Endothelial cell of umbilical vein (primary cell): ENCODE measurements at regions of chr14 and their contacts with region 1.

Region 1: DNA sequence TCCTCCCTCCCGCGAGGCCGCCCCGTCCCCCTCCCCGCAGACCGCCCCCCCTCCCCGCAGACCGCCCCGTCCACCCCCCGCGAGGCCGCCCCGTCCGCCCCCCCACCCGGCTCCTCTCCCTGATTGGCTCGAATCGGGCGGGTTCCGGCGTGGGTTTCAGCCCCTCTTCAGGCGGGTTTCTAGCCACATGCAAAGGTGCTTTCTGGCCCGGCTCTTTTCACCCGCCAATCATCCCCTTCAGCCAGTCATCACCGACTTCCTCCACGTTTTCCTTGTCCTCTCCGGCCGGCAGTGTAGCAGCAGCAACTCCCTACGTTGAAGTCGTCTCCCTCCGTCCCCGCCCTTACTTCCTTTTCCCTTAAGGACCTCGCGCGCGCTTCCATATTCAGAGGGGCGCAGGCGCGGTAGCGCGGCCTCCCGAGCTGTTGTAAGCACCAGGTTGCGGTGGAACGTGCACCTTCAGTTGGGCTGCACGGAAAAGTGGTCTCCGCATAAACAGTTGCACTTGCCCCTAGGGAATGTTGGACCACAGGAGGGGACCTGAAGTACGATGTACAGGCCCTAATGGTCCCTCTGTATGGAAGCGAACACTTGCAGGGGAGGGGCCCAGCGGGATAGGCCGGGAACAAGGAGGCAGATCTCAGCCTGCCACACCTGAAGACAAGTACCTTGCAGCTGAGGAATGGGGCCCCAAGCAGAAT is 44.6 kb upstream of the ESR2 start:
- DNase-seq: peak; percentile 99
- H3K4me3 ChIP-seq: peak overlapping the region; percentile 50 to 56 (median 51)
- H3K27ac ChIP-seq: peak overlapping the region; percentile 14
- H3K4me1 ChIP-seq: peaks cover 10% of the 10 kb centered on the region
- H3K27me3 ChIP-seq: no peaks in the 10 kb centered on the region
- CTCF ChIP-seq: no peak
- POLR2A ChIP-seq: peak; percentile 79

Region 2: DNA sequence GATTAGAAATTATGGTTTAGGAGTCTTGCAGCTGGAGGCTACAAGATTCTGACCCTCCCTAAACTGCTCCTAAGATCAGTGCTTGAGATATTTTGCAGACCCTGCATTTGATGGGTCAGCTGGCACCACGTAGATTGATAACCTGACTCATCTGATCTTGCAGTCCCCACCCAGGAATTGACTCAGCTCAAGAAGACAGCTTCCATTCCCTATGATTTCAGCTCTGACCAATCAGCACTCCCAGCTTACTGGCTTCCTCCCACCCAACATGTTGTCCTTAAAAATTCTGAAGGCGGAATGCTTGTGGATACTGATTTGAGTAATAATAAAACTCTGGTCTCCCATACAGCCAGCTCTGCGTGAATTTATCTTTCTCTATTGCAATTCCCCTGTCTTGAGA is 26.1 kb after region 1 on chr14:
- CTCF ChIA-PET with region 1: no interaction called
- POLR2A ChIA-PET with region 1: no interaction called
- dilution Hi-C with region 1: no loop called
- intact Hi-C with region 1: no loop called
- DNase-seq: no peak
- H3K4me3 ChIP-seq: no peak overlapping the region
- H3K27ac ChIP-seq: no peak overlapping the region
- H3K4me1 ChIP-seq: no peaks in the 10 kb centered on the region
- H3K27me3 ChIP-seq: no peaks in the 10 kb centered on the region
- CTCF ChIP-seq: no peak
- POLR2A ChIP-seq: no peak

Region 3: DNA sequence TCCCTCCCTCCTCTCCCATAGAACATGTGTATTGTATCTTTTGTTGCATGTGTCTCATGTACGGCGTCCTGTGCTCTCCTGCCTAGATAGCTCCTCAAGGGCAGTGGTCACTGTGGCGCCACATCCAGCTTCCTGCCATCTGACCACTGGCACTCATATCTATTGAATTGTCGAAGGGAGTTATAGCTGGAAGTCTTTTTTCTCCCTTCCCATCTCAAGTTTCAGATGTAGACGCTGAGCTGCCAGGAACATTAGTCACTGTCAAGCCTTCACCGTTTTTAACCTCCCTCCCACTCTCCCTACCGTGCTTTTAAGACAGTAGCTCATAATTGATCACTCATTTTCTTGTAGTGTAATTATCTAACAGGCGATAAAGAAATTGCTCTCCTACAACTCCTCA is 82.4 kb after region 1 on chr14:
- CTCF ChIA-PET with region 1: interaction called, 11 read pairs
- POLR2A ChIA-PET with region 1: interaction called, 3 read pairs
- dilution Hi-C with region 1: no loop called
- intact Hi-C with region 1: no loop called
- DNase-seq: no peak
- H3K4me3 ChIP-seq: no peak overlapping the region
- H3K27ac ChIP-seq: no peak overlapping the region
- H3K4me1 ChIP-seq: no peaks in the 10 kb centered on the region
- H3K27me3 ChIP-seq: no peaks in the 10 kb centered on the region
- CTCF ChIP-seq: no peak
- POLR2A ChIP-seq: no peak

Region 4: DNA sequence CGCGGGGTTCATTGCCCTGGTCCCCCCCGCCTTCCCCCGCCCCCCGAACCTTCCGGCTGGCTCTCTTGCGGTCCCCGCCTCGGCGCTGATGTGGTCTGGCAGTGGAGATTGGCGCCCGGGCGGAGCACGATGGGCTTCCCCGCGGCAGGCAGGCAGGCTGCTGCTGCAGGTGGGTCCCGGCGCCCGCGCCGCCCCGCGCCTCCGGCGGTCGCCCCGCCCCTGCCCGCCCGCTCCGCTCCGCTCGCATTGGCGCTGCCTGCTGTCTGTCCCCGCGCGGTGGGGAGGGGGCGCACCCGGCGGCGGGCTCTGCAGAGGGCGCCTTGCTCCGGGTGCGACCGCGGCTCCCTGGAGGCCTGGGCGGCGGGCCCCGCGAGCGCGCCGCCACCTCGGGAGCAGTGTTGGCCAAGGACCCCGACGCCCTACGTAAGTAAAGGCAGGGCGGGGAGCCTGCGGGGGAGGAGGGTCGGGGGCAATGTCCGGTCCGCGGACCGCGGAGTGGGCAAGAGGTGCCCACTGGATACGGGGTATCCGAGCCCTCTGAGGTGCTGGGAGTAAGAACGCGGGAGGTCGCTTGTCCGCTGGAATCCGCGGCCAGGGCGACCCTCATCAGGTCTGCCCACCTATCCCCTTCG is 126.5 kb after region 1 on chr14 and contains the start of gene AKAP5:
- CTCF ChIA-PET with region 1: interaction called, 17 read pairs
- POLR2A ChIA-PET with region 1: no interaction called
- dilution Hi-C with region 1: no loop called
- intact Hi-C with region 1: no loop called
- DNase-seq: peak; percentile 63
- H3K4me3 ChIP-seq: peak within 1 kb of the TSS; percentile 70 to 79 (median 76)
- H3K27ac ChIP-seq: no peak within 1 kb of the TSS
- H3K4me1 ChIP-seq: peaks cover 14% of the 10 kb centered on the region
- H3K27me3 ChIP-seq: no peaks in the 10 kb centered on the region
- CTCF ChIP-seq: no peak
- POLR2A ChIP-seq: no peak
- total RNA-seq, gene AKAP5: 0.75 and 1.1 TPM in 2 replicates

Region 5: DNA sequence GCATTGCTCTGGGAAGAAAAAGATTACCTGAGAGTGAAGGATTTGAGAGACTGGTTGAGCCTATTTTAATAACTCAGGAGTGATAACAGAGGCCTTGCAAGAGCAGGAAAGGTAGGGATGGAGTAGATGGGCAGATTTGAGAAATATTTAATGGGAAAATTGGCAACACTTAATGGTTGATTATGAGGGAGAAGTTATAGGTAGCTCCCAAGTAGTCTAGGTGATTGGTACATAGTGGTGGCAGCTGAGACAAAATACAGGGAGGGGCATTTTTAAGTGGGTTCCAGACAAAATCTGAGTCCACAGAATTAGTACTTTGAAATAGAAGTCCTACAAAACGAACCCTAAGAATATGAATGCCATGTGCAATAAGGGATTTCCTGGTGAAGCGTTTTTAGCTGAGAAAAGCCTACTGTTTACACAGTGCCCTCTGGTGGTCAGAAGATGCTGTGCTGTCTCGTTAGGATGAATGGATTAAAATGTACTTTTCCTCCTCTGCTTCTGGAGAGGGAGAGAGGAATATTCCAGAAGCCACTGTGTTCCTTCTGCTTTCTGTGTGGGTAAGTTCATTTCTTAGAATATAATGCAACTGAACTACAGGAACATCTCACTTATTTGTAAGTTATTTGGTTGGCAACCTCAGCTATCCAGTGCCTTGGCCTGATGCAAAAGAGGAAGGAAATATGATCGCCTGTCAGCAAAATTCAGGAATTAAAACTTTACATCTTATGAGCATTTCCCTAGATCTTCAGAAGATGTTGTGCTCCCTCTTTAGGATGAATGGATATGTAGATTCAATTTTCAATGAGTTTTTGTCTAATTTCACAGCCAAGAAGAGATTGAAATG is 172.3 kb after region 1 on chr14:
- CTCF ChIA-PET with region 1: interaction called, 43 read pairs
- POLR2A ChIA-PET with region 1: no interaction called
- dilution Hi-C with region 1: no loop called
- intact Hi-C with region 1: no loop called
- DNase-seq: peak; percentile 72
- H3K4me3 ChIP-seq: no peak overlapping the region
- H3K27ac ChIP-seq: no peak overlapping the region
- H3K4me1 ChIP-seq: peaks cover 21% of the 10 kb centered on the region
- H3K27me3 ChIP-seq: no peaks in the 10 kb centered on the region
- CTCF ChIP-seq: peak; percentile 78 to 84
- POLR2A ChIP-seq: no peak

Region 6: DNA sequence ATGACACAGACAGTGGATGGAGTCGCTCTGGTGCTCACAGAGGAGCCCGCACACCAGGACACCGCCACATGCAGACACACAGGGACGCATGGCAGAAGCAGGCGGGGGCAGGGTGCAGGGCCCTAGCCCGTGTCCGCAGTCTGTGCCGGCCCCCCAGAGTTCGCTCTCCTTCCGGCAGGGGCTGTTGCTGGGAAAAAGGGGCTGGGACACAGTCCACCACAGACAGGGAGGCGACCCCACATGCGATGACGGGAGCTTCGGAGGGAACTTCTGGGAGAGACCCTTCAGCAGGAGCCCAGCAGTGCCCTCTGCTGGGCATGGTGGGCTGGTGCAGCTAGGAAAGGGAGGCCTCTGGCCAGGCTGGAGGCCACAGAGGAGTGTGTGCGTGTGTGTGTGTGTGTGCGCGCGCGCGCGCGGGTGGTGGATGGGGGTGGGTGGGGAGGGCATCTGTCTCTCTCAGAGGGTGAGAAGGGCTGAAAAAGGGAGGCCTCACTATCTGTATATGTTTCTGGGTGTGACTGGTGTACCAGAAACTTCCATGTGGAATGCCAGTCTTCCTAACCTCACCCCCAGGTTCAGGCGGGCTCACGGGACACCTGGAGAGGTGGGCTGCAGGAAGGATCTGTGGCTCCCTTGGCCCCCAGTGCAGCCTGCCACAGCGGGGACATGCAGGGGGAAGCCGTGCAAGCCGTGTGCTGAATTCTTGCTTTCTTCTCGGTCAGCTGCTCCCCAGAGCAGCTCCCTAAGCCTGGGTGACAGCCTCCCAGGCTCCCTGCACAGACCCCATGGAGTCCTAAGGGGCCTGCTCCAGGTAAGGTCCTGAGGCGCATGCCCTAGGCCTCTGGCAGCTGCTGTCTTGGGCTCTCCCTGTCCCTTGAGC is 426.1 kb after region 1 on chr14:
- CTCF ChIA-PET with region 1: interaction called, 10 read pairs
- POLR2A ChIA-PET with region 1: no interaction called
- dilution Hi-C with region 1: no loop called
- intact Hi-C with region 1: no loop called
- DNase-seq: peak; percentile 74
- H3K4me3 ChIP-seq: no peak overlapping the region
- H3K27ac ChIP-seq: peak overlapping the region; percentile 30
- H3K4me1 ChIP-seq: peaks cover 21% of the 10 kb centered on the region
- H3K27me3 ChIP-seq: no peaks in the 10 kb centered on the region
- CTCF ChIP-seq: peak; percentile 80 to 97
- POLR2A ChIP-seq: no peak